ENCODE measurements at regions of chr3 and their contacts with region 1.

Region 1: GRCh38 chr3:143016321-143016972 is 15.1 kb downstream of the U2SURP start:
- DNase-seq: peak; percentile 48
- H3K4me3 ChIP-seq: no peak overlapping the region
- H3K27ac ChIP-seq: no peak overlapping the region
- H3K4me1 ChIP-seq: no peaks in the 10 kb centered on the region
- H3K27me3 ChIP-seq: no peaks in the 10 kb centered on the region
- CTCF ChIP-seq: peak; percentile 28 to 41
- POLR2A ChIP-seq: no peak

Region 2: GRCh38 chr3:143040261-143040879 is 23.9 kb after region 1 on chr3:
- CTCF ChIA-PET with region 1: interaction called, 13 read pairs
- POLR2A ChIA-PET with region 1: no interaction called
- dilution Hi-C with region 1: no loop called
- intact Hi-C with region 1: no loop called
- DNase-seq: peak; percentile 37
- H3K4me3 ChIP-seq: no peak overlapping the region
- H3K27ac ChIP-seq: no peak overlapping the region
- H3K4me1 ChIP-seq: no peaks in the 10 kb centered on the region
- H3K27me3 ChIP-seq: no peaks in the 10 kb centered on the region
- CTCF ChIP-seq: peak; percentile 26 to 32
- POLR2A ChIP-seq: no peak

Region 3: GRCh38 chr3:143119009-143119914 is 102.8 kb after region 1 on chr3 and contains the start of gene CHST2:
- CTCF ChIA-PET with region 1: no interaction called
- POLR2A ChIA-PET with region 1: no interaction called
- dilution Hi-C with region 1: no loop called
- intact Hi-C with region 1: no loop called
- DNase-seq: peak; percentile 73
- H3K4me3 ChIP-seq: peak within 1 kb of the TSS; percentile 48 to 94 (median 84)
- H3K27ac ChIP-seq: peak within 1 kb of the TSS; percentile 16
- H3K4me1 ChIP-seq: peaks cover 5% of the 10 kb centered on the region
- H3K27me3 ChIP-seq: peaks cover 0 to under 1% of the 10 kb centered on the region in 2 experiments
- CTCF ChIP-seq: no peak
- POLR2A ChIP-seq: peak; percentile 67
- total RNA-seq, gene CHST2: 2.5 and 6.5 TPM in 2 replicates

Region 4: GRCh38 chr3:144743225-144743668 is 1726.8 kb after region 1 on chr3:
- CTCF ChIA-PET with region 1: no interaction called
- POLR2A ChIA-PET with region 1: no interaction called
- dilution Hi-C with region 1: no loop called
- intact Hi-C with region 1: loop called (anchors 5 kb)
- DNase-seq: no peak
- H3K4me3 ChIP-seq: no peak overlapping the region
- H3K27ac ChIP-seq: no peak overlapping the region
- H3K4me1 ChIP-seq: no peaks in the 10 kb centered on the region
- H3K27me3 ChIP-seq: no peaks in the 10 kb centered on the region
- CTCF ChIP-seq: no peak
- POLR2A ChIP-seq: no peak

Measured in endothelial cell of umbilical vein (primary cell).